Esophagus squamous epithelium (tissue), 5 donors: ENCODE measurements at regions of chr9 and their contacts with region 1.

Region 1: GRCh38 chr9:21081999-21082398 is 4.3 kb upstream of the IFNB1 start:
- DNase-seq: no peak
- H3K4me3 ChIP-seq: no peak overlapping the region
- H3K27ac ChIP-seq: no peak overlapping the region
- H3K4me1 ChIP-seq: no peaks in the 10 kb centered on the region
- H3K27me3 ChIP-seq: no peaks in the 10 kb centered on the region
- CTCF ChIP-seq: no peak
- POLR2A ChIP-seq: no peak

Region 2: DNA sequence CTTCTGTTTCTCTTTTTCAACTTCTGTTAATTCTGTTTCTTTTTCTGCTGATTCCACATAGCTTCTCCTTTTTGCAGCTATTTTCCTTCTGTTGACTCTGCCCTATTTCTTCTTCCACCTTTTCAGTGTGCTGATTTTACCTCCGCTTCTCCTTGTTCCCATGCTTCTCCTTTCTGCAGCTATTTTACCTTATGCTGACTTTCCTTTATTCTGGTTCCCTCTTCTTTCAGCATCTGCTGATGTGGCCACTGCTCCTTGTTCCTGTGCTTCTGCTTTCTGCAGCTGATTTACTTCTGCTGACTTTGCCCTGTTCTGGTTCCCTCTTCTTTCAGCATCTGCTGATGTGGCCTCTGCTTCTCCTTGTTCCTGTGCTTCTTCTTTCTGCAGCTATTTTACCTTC is 109.3 kb before region 1 on chr9:
- intact Hi-C with region 1: loop called (anchors 10 kb)
- DNase-seq: no peak
- H3K4me3 ChIP-seq: no peak overlapping the region
- H3K27ac ChIP-seq: no peak overlapping the region
- H3K4me1 ChIP-seq: no peaks in the 10 kb centered on the region
- H3K27me3 ChIP-seq: no peaks in the 10 kb centered on the region
- CTCF ChIP-seq: no peak
- POLR2A ChIP-seq: no peak

Region 3: DNA sequence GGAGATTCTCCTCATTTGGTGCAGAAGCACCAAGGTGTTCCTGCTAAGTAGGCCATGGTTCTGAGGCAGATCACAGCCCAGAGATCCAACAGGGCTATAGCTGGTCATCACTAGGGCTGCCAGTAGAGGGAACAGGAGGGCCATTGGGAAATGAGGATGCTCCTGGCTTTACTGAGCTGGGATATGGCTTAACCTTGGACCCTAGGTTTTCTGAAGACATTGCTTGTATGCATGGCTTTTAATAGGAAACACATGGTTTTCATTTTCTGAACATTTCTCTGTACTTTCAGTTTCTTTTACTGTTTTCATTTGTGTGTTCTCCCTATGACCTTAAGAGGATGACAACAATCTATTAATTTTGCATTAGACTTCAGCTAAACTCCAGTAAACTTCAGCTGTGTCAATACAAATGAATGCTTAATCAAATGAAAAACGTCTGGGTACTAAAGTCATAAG is 59.5 kb after region 1 on chr9 and contains the start of gene IFNW1:
- intact Hi-C with region 1: no loop called
- DNase-seq: no peak
- H3K4me3 ChIP-seq: no peak within 1 kb of the TSS
- H3K27ac ChIP-seq: no peak within 1 kb of the TSS
- H3K4me1 ChIP-seq: no peaks in the 10 kb centered on the region
- H3K27me3 ChIP-seq: no peaks in the 10 kb centered on the region
- CTCF ChIP-seq: no peak
- POLR2A ChIP-seq: no peak
- total RNA-seq, gene IFNW1: not detected